ENCODE measurements at regions of chr6 and their contacts with region 1.

Region 1: DNA sequence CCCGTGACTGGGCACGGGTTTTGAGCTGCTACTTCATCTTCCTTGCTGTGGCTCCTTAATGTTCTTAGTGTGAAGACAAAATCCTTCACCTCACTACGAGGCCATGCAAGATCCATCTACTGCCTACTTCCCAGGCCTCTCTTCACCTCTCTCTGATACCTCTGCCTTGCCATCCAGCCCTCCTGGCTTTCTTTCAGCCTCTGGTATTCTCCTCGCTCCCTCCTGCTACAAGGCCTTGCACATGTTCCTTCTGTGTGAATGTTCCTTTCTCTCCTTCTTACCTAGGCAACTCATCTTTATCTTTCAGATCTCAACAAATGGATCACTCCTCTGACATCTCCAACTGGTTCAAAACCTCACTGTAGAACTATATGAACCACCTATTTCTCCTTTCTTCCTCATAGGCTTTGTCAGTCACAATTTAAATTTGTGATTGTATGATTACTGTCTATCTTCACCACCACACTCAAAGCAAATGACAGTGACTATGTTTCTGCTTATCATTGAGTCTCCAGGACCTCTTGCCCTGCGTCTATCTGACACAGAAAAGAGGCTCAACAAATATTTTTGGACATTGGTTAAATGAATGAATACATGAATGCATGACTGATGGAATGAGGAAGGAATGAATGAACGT is 19.8 kb downstream of the HEY2 start:
- DNase-seq: no peak
- H3K4me3 ChIP-seq: no peak overlapping the region
- H3K27ac ChIP-seq: peak overlapping the region; percentile 33 to 42
- H3K4me1 ChIP-seq: peaks cover 0 to 26% (median 17%) of the 10 kb centered on the region in 4 donors
- H3K27me3 ChIP-seq: no peaks in the 10 kb centered on the region
- CTCF ChIP-seq: no peak

Region 2: DNA sequence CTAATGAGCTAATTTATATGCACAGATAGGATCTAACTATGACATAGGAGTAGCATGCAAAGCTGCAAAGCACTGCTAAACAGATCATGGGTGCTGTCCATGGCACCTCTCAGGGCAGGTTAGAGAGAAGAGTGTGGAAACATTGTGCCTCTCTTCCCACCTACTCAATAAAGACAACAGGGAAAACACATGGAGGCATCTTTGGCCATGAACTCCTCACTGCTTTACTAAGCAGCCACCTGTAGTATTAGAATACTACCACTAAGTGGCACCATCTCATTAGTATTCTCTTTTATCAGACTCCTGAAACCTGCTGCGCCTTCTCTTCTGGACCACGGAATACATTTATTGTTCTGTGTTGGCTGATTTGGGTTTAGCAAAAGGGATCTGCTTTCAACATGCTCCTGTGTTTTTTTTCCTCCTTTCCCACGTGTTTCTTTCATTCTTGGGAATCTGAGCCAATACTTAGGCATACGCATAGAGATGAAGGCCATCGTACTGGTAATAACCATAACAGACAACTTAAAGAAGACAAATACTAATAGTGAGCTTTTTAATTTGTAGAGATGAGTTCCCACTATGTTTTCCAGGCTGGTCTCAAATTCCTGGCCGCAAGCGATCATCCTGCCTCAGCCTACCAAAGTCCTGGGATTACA is 458.1 kb before region 1 on chr6:
- intact Hi-C with region 1: loop called (anchors 2 kb)
- DNase-seq: no peak
- H3K4me3 ChIP-seq: no peak overlapping the region
- H3K27ac ChIP-seq: peak overlapping the region; percentile 29 to 72
- H3K4me1 ChIP-seq: peaks cover 0 to 56% (median 10%) of the 10 kb centered on the region in 4 donors
- H3K27me3 ChIP-seq: no peaks in the 10 kb centered on the region
- CTCF ChIP-seq: peak; percentile 87 to 90

Region 3: DNA sequence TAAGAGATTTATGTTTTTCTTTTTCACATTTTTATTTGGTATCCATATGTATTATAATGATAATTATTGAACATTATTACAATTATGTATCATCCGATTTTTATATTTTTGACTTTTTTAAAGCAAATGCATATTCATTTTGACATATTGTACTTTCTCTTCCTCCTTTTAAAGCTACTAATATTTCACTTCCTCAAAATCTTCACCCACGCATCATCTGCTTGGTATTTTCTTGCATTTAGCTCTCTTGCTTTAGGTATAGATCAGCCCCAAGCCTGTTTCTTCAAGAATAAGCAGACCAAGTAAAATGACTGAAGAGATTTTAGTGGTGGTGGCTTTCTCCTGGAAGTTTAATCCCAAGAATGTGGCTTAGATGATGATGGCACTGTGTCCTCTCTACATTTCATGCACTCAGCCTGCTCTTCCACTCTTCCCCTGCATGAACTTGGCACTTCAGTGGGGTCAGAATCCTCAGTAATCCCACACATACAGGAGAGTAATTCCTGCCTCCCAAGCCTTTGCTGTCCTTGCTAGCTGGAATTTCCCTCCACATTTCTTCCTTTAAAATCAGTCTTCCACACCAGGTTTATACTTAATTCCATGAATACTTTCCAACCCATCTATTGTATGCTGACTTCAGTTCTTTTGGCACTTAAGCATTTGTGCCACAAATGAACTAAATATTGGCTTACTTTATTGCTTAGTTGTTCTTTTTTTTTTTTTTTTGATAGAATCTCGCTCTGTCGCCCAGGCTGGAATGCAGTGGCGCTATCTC is 29.7 kb after region 1 on chr6:
- intact Hi-C with region 1: no loop called
- DNase-seq: no peak
- H3K4me3 ChIP-seq: no peak overlapping the region
- H3K27ac ChIP-seq: no peak overlapping the region
- H3K4me1 ChIP-seq: peaks cover 0 to 28% (median 6%) of the 10 kb centered on the region in 4 donors
- H3K27me3 ChIP-seq: no peaks in the 10 kb centered on the region
- CTCF ChIP-seq: no peak

Measured in tibial artery (tissue), 4 donors.